PC-9 (cell line): ENCODE measurements at regions of chr7 and their contacts with region 1.

Region 1: DNA sequence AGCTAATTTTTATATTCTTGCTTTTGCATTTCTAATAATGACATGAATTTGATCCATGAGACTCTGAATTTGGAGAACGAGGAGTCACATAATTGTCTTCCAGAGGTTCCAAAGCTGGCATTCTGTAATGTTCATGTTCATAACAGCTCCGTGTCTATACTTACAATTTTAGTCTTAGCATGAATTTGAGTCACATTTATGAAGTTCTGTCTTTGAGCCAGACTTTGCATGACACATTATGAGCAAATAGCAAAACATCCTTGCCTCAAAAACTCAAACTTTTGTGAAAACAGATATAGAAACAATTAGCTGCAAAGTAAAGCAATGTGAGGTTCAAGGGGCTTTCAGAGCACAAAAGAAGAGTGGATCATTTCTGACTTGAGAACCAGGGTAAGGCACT is 44.5 kb upstream of the CAV2 start:
- DNase-seq: no peak
- H3K4me3 ChIP-seq: no peak overlapping the region
- H3K27ac ChIP-seq: no peak overlapping the region
- H3K4me1 ChIP-seq: 0 out of 2 replicates have a peak, but pooled peaks cover 4% of the 10 kb centered on the region
- H3K27me3 ChIP-seq: no peaks in the 10 kb centered on the region
- CTCF ChIP-seq: no peak

Region 2: GRCh38 chr7:116316833-116317612 is 138.0 kb before region 1 on chr7:
- CTCF ChIA-PET with region 1: interaction called, 3 read pairs
- POLR2A ChIA-PET with region 1: no interaction called
- intact Hi-C with region 1: loop called (anchors 2 kb)
- DNase-seq: peak; percentile 76 to 97
- H3K4me3 ChIP-seq: peak overlapping the region; percentile 29; the same call in 1 of the 2 replicates
- H3K27ac ChIP-seq: peak overlapping the region; percentile 88
- H3K4me1 ChIP-seq: peaks cover 31% of the 10 kb centered on the region
- H3K27me3 ChIP-seq: no peaks in the 10 kb centered on the region
- CTCF ChIP-seq: no peak